GM18951 (cell line): ENCODE measurements at regions of chr22 and their contacts with region 1.

Region 1: GRCh38 chr22:46362203-46362933 is 26.9 kb downstream of the TRMU start:
- POLR2A ChIP-seq: no peak

Region 2: GRCh38 chr22:46542011-46542985 is 179.9 kb after region 1 on chr22:
- in situ Hi-C with region 1: loop called (anchors 5 kb)
- POLR2A ChIP-seq: no peak